Activated CD4-positive, alpha-beta T cell treated with anti-CD3 and anti-CD28 coated beads for 36 hours (primary cell): ENCODE measurements at regions of chr9 and their contacts with region 1.

Region 1: GRCh38 chr9:72997387-72997995 is 44.6 kb upstream of the ALDH1A1 start:
- DNase-seq: no peak
- ATAC-seq: no peak
- H3K4me3 Mint-ChIP-seq: no peak overlapping the region
- H3K27ac Mint-ChIP-seq: no peak overlapping the region
- H3K4me1 Mint-ChIP-seq: peaks cover 4% of the 10 kb centered on the region
- H3K27me3 Mint-ChIP-seq: peaks cover 4% of the 10 kb centered on the region

Region 2: DNA sequence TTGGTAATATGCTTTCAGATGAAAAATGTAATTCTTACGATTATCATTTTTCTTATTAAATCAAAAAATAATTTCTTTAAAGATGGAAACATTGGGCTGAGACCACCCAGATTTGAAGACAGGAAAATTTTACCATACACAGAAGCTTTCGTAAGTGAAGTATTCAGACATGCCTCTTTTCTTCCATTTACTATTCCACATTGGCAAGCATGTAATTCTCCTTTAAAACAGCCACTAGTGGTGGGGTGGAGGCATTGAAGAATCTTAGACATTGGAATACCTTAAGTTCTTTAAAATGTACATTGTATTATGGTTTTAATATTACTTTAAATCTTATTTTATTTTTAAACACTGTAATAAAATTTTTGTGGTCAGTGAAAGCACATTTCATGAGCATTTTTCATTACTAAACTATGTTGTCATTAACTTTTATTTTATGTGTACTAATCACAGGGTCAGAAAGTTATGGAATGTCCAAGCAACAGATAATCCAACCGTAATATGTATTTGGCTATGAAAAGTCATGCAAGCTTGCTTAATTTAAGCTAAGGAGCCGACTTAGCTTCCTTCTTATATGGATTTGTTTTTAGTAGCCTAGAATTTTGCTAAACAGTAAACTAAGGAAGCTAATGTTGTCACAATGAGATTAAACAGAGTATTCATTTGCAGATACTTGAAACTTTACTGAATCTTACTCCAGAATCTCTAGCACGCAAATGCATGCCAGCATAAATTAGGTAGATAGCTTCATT is 52.8 kb after region 1 on chr9:
- CTCF ChIA-PET with region 1: no interaction called
- POLR2A ChIA-PET with region 1: no interaction called
- intact Hi-C with region 1: loop called in 1 of 2 experiments (anchors 10 kb)
- DNase-seq: no peak
- ATAC-seq: no peak
- H3K4me3 Mint-ChIP-seq: no peak overlapping the region
- H3K27ac Mint-ChIP-seq: no peak overlapping the region
- H3K4me1 Mint-ChIP-seq: no peaks in the 10 kb centered on the region
- H3K27me3 Mint-ChIP-seq: peaks cover 9% of the 10 kb centered on the region